ENCODE measurements at regions of chr21 and their contacts with region 1.

Region 1: DNA sequence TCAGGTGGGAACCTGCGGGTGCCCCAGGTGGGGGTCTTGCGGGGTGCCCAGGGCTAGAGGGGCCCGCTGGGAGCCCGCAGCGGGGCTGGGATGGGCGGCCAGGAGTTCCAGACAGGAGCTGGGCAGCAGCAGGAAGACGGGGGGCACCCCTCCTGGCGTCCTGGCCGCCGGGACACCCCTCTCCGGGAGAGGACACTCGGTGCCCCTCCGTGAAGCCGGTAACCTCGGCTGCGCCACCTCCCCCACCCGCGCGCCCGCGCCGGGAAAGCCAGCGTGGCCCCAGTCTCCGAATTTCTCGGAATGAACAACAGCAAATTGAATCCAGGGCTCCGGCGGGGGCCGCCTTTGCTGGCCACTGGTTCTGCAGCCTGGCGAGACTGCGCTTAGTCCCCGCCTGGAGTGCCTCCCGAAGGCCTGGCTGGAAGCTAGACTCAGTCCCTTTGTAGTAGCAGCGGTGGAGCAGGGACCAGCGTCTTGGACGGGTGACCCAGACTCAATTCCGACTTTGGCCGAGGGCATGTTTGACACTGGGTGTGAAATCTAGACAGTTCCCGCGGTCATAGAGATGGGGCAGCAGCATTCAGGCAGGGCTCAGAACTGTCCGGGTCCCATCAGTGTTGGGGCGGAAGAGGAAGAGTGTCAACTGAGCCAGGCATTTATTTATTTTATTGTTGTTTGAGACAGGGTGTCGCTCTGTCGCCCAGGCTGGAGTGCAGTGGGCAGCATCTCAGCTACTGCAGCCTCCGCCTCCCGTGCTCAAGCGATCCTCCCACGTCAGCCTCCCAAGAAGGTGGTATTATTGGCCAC is 769 bp downstream of the IFNGR2 start:
- DNase-seq: peak; percentile 49
- H3K4me3 ChIP-seq: peak overlapping the region; percentile 63 to 97 (median 83)
- H3K27ac ChIP-seq: peak overlapping the region; percentile 89
- H3K4me1 ChIP-seq: peaks cover 17% of the 10 kb centered on the region
- H3K27me3 ChIP-seq: no peaks in the 10 kb centered on the region
- CTCF ChIP-seq: no peak

Region 2: DNA sequence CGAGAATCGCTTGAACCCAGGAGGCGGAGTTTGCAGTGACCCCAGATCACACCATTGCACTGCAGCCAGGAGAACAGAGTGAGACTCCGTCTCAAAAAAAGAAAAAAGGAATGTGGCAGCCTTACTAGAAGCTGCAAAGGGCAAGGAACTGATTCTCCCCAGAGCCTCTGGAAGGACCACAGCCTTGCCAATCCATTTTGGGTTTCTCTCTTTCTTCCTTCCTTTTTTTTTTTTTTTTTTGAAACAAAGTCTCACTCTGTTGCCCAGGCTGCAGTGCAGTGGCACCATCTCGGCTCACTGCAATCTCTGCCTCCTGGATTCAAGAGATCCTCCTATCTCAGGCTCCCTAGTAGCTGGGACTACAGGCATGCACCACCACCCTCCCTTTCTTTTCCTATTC is 10.6 kb before region 1 on chr21:
- CTCF ChIA-PET with region 1: no interaction called
- dilution Hi-C with region 1: no loop called
- in situ Hi-C with region 1: no loop called
- intact Hi-C with region 1: loop called (anchors 1 kb)
- DNase-seq: no peak
- H3K4me3 ChIP-seq: no peak overlapping the region
- H3K27ac ChIP-seq: no peak overlapping the region
- H3K4me1 ChIP-seq: peaks cover 15% of the 10 kb centered on the region
- H3K27me3 ChIP-seq: no peaks in the 10 kb centered on the region
- CTCF ChIP-seq: no peak